ENCODE measurements at regions of chr7 and their contacts with region 1.

Region 1: GRCh38 chr7:26200444-26201246 is at the start of gene HNRNPA2B1:
- DNase-seq: peak; percentile 93
- H3K4me3 ChIP-seq: peak within 1 kb of the TSS; percentile 97
- H3K27ac ChIP-seq: peak within 1 kb of the TSS; percentile 96
- H3K27me3 ChIP-seq: no peaks in the 10 kb centered on the region
- CTCF ChIP-seq: no peak
- polyA plus RNA-seq, gene HNRNPA2B1: 354 and 493 TPM in 2 replicates

Region 2: GRCh38 chr7:25862260-25863037 is 338.2 kb before region 1 on chr7:
- CTCF ChIA-PET with region 1: no interaction called
- POLR2A ChIA-PET with region 1: interaction called, 18 read pairs
- DNase-seq: peak; percentile 100
- H3K4me3 ChIP-seq: no peak overlapping the region; the same call in 1 of the 2 replicates
- H3K27ac ChIP-seq: no peak overlapping the region
- H3K27me3 ChIP-seq: peaks cover 38% of the 10 kb centered on the region
- CTCF ChIP-seq: no peak

Region 3: GRCh38 chr7:26151953-26152781 is 48.5 kb before region 1 on chr7 and contains the start of gene NFE2L3:
- CTCF ChIA-PET with region 1: interaction called, 12 read pairs
- POLR2A ChIA-PET with region 1: interaction called, 28 read pairs
- DNase-seq: no peak
- H3K4me3 ChIP-seq: peak within 1 kb of the TSS; percentile 69
- H3K27ac ChIP-seq: no peak within 1 kb of the TSS
- H3K27me3 ChIP-seq: no peaks in the 10 kb centered on the region
- CTCF ChIP-seq: no peak
- polyA plus RNA-seq, gene NFE2L3: 50.2 and 63.5 TPM in 2 replicates

Region 4: GRCh38 chr7:26167301-26167934 is 33.2 kb before region 1 on chr7:
- CTCF ChIA-PET with region 1: interaction called, 11 read pairs
- POLR2A ChIA-PET with region 1: no interaction called
- DNase-seq: no peak
- H3K4me3 ChIP-seq: no peak overlapping the region
- H3K27ac ChIP-seq: no peak overlapping the region
- H3K27me3 ChIP-seq: no peaks in the 10 kb centered on the region
- CTCF ChIP-seq: no peak

Region 5: DNA sequence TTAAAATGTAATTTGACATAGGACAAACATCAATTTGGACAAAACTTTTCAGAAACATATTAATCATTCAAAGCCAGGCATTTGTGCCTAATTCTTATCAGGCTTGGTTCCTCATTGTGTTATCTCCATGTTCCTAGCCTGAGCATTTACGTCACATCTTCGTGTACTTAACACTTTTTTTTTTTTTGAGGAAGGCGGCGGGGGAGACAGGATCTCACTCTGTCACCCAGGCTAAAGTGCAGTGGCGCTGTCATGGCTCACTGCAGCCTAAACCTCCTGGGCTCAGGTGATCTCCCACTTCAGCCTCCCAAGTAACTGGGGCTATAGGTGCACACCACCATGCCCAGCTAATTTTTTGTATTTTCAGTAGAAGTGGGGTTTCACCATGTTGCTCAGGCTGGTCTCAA is 19.9 kb before region 1 on chr7:
- CTCF ChIA-PET with region 1: interaction called, 5 read pairs
- POLR2A ChIA-PET with region 1: interaction called, 11 read pairs
- DNase-seq: no peak
- H3K4me3 ChIP-seq: no peak overlapping the region
- H3K27ac ChIP-seq: no peak overlapping the region
- H3K27me3 ChIP-seq: no peaks in the 10 kb centered on the region
- CTCF ChIP-seq: no peak

Region 6: DNA sequence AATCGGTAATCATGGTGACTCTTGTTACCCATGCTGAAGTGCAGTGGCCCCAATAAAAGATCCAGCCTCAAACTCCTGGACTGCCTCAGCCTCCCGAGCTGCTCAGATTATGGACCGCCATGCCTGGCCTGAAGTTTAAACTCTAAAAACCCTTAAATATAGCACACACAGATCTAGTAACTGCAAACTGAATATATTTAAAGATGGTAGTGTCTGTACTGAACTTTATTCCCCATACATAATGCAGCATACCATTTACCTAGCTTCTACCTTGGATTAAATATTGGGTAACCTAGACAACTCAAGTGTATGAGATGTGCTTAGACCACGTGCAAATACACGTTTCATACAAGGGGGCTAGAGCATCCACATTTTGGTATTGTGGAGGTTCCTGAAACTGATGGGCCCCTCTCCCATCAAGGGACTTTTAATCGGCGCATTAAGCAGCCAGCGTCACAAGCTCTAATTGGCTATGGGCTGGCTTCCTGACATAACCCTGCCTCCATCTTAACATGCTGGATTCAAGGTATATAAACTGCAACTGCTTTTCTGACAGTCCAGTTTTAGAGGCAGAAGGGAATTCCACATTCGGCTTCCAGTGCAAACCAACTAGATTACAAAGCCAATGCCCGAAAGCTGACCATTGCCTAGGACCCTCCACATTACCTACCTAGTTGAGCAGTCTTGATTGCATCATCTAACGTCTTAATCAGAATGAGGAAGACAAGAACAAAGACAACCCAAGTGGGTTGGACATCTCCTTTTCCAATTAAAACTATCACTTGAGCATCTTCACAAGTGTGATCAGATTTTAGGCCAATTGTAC is 13.1 kb before region 1 on chr7:
- CTCF ChIA-PET with region 1: interaction called, 34 read pairs
- POLR2A ChIA-PET with region 1: interaction called, 12 read pairs
- DNase-seq: no peak
- H3K4me3 ChIP-seq: no peak overlapping the region
- H3K27ac ChIP-seq: no peak overlapping the region
- H3K27me3 ChIP-seq: no peaks in the 10 kb centered on the region
- CTCF ChIP-seq: no peak

Region 7: GRCh38 chr7:26224359-26224758 is 23.7 kb after region 1 on chr7:
- CTCF ChIA-PET with region 1: no interaction called
- POLR2A ChIA-PET with region 1: no interaction called
- DNase-seq: no peak
- H3K4me3 ChIP-seq: no peak overlapping the region
- H3K27ac ChIP-seq: no peak overlapping the region
- H3K27me3 ChIP-seq: peaks cover 2% of the 10 kb centered on the region
- CTCF ChIP-seq: no peak